ENCODE measurements at regions of chr12 and their contacts with region 1.

Region 1: DNA sequence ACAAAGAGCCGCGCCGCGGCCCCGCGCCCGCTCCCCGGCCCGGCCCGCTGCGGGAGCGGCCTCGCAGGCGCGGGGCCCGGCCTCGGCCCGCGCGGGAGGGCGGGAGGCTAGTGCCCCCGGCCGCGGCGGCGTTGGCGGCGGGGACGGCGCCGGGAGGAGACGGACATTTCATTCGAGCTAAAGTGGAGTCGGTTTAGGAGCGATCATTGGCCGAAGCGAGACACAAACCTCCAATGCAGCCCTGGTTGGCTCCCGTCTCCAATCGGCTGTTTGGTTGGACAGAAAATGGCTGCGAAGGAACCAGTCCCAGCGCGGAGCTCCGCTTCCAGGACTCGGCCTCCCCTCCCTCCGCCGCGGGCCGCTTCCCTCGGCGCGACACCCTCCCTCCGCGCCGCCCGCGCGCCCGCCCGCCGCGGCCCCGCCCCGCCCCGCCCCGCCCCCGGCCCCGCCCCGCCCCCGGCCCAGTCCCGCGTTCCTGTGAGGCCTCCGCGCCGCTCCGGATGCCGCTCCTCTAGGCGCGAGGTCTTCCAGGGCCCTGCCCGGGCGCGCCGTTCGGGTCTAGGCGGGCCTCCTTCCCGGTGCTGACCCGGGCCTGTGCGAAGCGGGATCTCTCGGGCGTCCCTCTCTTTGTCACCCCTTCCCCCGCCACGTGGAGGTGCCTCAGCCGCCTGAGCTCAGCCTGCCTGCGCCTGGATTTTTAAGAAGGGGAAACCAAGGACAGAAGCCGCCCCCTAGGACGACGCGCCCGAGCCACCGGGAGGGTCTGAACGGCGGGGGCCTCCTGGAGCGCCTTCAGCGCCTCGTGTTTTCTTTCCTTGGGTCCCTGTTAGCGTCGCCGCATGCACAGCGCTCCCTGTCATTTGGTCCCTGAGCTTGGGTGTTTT is at the start of gene NFYB:
- DNase-seq: peak; percentile 95
- H3K4me3 Mint-ChIP-seq: peak within 1 kb of the TSS; percentile 83
- H3K27ac Mint-ChIP-seq: peak within 1 kb of the TSS; percentile 84
- H3K4me1 Mint-ChIP-seq: peaks cover 13% of the 10 kb centered on the region
- H3K27me3 Mint-ChIP-seq: no peaks in the 10 kb centered on the region
- total RNA-seq, gene NFYB: 23.6 to 24.5 TPM

Region 2: GRCh38 chr12:103715494-103715893 is 422.7 kb before region 1 on chr12:
- CTCF ChIA-PET with region 1: no interaction called
- POLR2A ChIA-PET with region 1: no interaction called
- intact Hi-C with region 1: no loop called
- DNase-seq: no peak
- H3K4me3 Mint-ChIP-seq: no peak overlapping the region
- H3K27ac Mint-ChIP-seq: no peak overlapping the region
- H3K4me1 Mint-ChIP-seq: no peaks in the 10 kb centered on the region
- H3K27me3 Mint-ChIP-seq: peaks cover 4% of the 10 kb centered on the region

Region 3: GRCh38 chr12:104090687-104091086 is 47.5 kb before region 1 on chr12:
- CTCF ChIA-PET with region 1: no interaction called
- POLR2A ChIA-PET with region 1: no interaction called
- intact Hi-C with region 1: no loop called
- DNase-seq: no peak
- H3K4me3 Mint-ChIP-seq: no peak overlapping the region
- H3K27ac Mint-ChIP-seq: no peak overlapping the region
- H3K4me1 Mint-ChIP-seq: peaks cover 12% of the 10 kb centered on the region
- H3K27me3 Mint-ChIP-seq: no peaks in the 10 kb centered on the region

Region 4: GRCh38 chr12:104121001-104121400 is 17.2 kb before region 1 on chr12:
- CTCF ChIA-PET with region 1: no interaction called
- POLR2A ChIA-PET with region 1: interaction called, 3 read pairs
- intact Hi-C with region 1: loop called (anchors 1 kb)
- DNase-seq: no peak
- H3K4me3 Mint-ChIP-seq: no peak overlapping the region
- H3K27ac Mint-ChIP-seq: no peak overlapping the region
- H3K4me1 Mint-ChIP-seq: no peaks in the 10 kb centered on the region
- H3K27me3 Mint-ChIP-seq: no peaks in the 10 kb centered on the region

Region 5: GRCh38 chr12:104303538-104304151 is 165.5 kb after region 1 on chr12 and contains the start of gene EID3:
- CTCF ChIA-PET with region 1: no interaction called
- POLR2A ChIA-PET with region 1: no interaction called
- intact Hi-C with region 1: loop called (anchors 5 kb)
- DNase-seq: peak; percentile 94
- H3K4me3 Mint-ChIP-seq: peak within 1 kb of the TSS; percentile 89
- H3K27ac Mint-ChIP-seq: peak within 1 kb of the TSS; percentile 93
- H3K4me1 Mint-ChIP-seq: peaks cover 60% of the 10 kb centered on the region
- H3K27me3 Mint-ChIP-seq: no peaks in the 10 kb centered on the region
- total RNA-seq, gene EID3: 4.7 TPM